Activated CD8-positive, alpha-beta T cell treated with anti-CD3 and anti-CD28 coated beads for 36 hours (primary cell): ENCODE measurements at regions of chr6 and their contacts with region 1.

Region 1: GRCh38 chr6:87322304-87323212 is at the start of gene SMIM8:
- DNase-seq: peak; percentile 91
- ATAC-seq: peak; percentile 100
- H3K4me3 Mint-ChIP-seq: peak within 1 kb of the TSS; percentile 96
- H3K27ac Mint-ChIP-seq: peak within 1 kb of the TSS; percentile 88
- H3K4me1 Mint-ChIP-seq: peaks cover 14% of the 10 kb centered on the region
- H3K27me3 Mint-ChIP-seq: no peaks in the 10 kb centered on the region
- CTCF ChIP-seq: peak; percentile 95
- total RNA-seq, gene SMIM8: 10.7 to 11.9 TPM

Region 2: DNA sequence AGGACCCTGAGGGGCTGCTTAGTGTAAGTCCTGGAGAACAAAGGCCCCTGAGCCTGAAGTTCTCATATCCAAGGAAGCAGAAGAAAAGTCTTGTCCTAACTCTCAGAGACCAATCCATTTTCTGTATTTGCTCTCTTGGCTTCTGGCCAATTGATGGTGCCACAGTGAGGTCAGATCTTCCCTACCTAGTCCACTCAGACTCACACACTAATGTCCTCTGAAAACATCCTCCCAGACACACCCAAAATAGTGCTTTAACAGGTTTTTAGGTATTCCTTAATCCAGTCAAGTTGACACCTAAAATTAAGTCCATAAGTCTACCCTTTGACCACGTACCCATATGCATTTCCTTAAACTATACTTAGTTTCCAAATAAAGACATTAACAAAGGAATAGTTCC is 137.8 kb before region 1 on chr6:
- CTCF ChIA-PET with region 1: no interaction called
- POLR2A ChIA-PET with region 1: no interaction called
- intact Hi-C with region 1: no loop called
- DNase-seq: no peak
- ATAC-seq: no peak
- H3K4me3 Mint-ChIP-seq: no peak overlapping the region
- H3K27ac Mint-ChIP-seq: peak overlapping the region; percentile 57
- H3K4me1 Mint-ChIP-seq: peaks cover 73% of the 10 kb centered on the region
- H3K27me3 Mint-ChIP-seq: no peaks in the 10 kb centered on the region
- CTCF ChIP-seq: no peak

Region 3: GRCh38 chr6:87472525-87473418 is 150.2 kb after region 1 on chr6 and contains the start of gene SLC35A1:
- CTCF ChIA-PET with region 1: interaction called, 3 read pairs
- POLR2A ChIA-PET with region 1: no interaction called
- intact Hi-C with region 1: loop called (anchors 10 kb)
- DNase-seq: peak; percentile 86
- ATAC-seq: peak; percentile 90
- H3K4me3 Mint-ChIP-seq: peak within 1 kb of the TSS; percentile 82
- H3K27ac Mint-ChIP-seq: peak within 1 kb of the TSS; percentile 95
- H3K4me1 Mint-ChIP-seq: peaks cover 18% of the 10 kb centered on the region
- H3K27me3 Mint-ChIP-seq: peaks cover 5% of the 10 kb centered on the region
- CTCF ChIP-seq: peak; percentile 11
- total RNA-seq, gene SLC35A1: 7.7 to 7.9 TPM